ENCODE measurements at regions of chr18 and their contacts with region 1.

Region 1: DNA sequence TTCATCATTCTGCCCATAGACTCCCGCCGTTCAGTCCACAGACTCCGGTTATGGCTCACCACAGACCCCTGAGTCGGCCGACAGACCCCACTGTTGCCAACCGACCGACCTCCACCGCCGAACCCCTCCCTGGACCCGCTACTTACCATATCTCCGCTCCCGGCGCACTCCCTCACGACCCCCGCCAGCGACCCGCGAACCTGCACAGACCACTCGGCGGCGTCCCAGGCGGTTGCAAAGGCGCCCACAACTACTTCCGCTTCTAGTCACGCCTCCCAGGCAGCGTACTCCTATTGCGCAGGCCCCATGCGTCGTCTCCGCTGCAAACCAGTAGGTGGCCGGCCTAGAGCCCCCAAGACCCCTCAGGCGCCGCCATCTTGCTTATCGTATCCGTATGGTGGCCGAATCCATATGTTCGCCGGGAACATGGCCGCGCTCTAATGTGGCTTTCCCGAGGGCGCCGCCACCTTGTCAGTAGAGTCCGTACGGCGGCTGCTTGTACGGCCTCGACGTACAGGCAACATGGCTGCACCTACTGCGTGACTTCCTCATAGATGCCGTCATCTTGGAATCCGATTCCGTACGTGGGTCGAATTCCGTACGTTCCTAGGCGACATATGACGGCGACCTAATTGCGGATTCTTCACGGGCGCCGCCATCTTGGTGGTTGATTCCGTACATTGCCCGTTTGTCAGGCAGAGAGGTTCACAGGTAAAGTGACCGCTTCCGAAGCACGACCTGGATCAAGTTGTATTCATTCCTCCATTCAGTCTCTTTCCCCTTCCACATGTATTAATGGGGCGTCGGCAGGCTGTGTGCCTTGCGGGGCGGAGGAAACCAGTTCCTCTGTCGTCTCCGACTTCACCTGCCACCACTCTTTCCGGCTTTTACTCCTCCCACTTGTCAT is at the start of gene CXXC1:
- DNase-seq: peak; percentile 89 to 98 (median 97)
- ATAC-seq: peak; percentile 92
- H3K4me3 ChIP-seq: peak within 1 kb of the TSS; percentile 98
- H3K4me3 Mint-ChIP-seq: peak within 1 kb of the TSS; percentile 91 to 100 (median 98)
- H3K27ac ChIP-seq: peak within 1 kb of the TSS; percentile 97
- H3K27ac Mint-ChIP-seq: peak within 1 kb of the TSS; percentile 94 to 100 (median 99)
- H3K4me1 ChIP-seq: peaks cover 0 to 7% of the 10 kb centered on the region in 2 donors
- H3K4me1 Mint-ChIP-seq: peaks cover 6 to 39% (median 28%) of the 10 kb centered on the region in 7 donors
- H3K27me3 ChIP-seq: no peaks in the 10 kb centered on the region
- H3K27me3 Mint-ChIP-seq: peaks cover 0 to 2% (median 0%) of the 10 kb centered on the region in 5 donors
- total RNA-seq, gene CXXC1: 141 to 197 (median 155) TPM

Region 2: DNA sequence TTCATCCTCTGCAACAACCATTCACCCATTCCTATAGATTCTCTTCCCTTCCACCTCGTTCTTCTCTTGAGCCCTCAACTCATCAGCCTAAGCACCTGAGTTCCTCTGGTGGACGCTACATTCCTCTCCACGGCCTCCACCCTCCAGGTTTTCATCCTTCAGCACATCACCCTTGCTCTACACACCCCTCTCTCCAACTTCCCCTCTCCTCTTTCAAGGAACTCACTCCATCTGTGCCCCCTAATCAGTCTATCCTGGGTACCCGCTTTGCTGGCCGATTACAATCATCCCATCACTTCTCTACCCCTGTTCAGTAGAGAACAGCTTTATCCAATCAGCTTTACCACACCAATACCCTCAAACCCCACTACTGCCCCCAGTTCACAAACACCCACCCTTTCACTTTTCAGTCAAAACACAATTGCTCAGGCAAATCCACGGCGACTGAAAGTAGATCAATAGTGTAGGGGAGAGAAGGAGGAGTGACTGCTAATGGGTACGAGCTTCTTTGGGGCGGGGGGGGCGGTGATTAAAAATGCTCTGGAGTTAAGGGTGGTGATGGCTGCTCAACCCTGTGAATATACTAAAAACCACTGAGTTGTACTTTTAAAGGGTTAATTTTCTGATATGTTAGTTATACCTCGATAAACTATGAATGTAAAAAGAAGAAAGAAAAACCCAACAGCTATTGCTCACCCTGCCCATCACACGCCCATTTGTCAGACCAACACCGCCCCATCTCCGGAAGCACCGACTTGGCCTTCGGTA is 828.1 kb before region 1 on chr18:
- CTCF ChIA-PET with region 1: no interaction called
- POLR2A ChIA-PET with region 1: no interaction called
- intact Hi-C with region 1: loop called in 1 of 2 experiments (anchors 1 kb)
- DNase-seq: peak in 3 of 9 donors; percentile 4 to 17 (median 5)
- ATAC-seq: peak; percentile 19
- H3K4me3 ChIP-seq: peak overlapping the region; percentile 86
- H3K4me3 Mint-ChIP-seq: peak overlapping the region; percentile 88 to 95 (median 94)
- H3K27ac ChIP-seq: peak overlapping the region; percentile 80
- H3K27ac Mint-ChIP-seq: peak overlapping the region; percentile 67 to 89 (median 83)
- H3K4me1 ChIP-seq: peaks cover 14 to 26% of the 10 kb centered on the region in 2 donors
- H3K4me1 Mint-ChIP-seq: peaks cover 34 to 62% (median 47%) of the 10 kb centered on the region in 7 donors
- H3K27me3 ChIP-seq: no peaks in the 10 kb centered on the region
- H3K27me3 Mint-ChIP-seq: peaks cover 0 to 6% (median 0%) of the 10 kb centered on the region in 5 donors

Region 3: DNA sequence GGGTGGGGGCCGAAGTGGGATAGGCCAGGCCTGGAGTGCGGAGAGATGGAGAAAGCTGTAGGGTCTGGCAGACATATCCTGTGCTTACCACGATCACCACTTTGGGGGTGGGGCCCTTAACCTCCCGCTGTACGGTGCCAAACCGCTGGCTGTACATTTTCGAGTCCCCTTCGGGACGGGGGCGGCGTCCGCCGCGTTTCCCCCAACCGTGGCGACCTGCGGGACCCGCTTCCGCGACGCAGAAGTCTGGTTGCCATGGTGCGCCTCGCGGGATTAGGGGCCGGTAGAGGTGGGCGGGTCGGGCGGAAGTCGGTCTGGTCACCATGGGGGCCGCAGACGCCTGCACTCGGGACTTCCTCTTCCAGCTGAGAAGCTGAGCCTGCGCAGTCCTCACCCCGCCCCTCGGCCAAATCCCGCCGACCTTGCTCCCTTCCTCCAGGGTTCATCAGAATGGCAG is 21.4 kb before region 1 on chr18 and contains the start of gene CFAP53:
- CTCF ChIA-PET with region 1: no interaction called
- POLR2A ChIA-PET with region 1: interaction called, 3 read pairs
- intact Hi-C with region 1: loop called (anchors 1 kb)
- DNase-seq: peak; percentile 51 to 83 (median 69)
- ATAC-seq: peak; percentile 88
- H3K4me3 ChIP-seq: peak within 1 kb of the TSS; percentile 59
- H3K4me3 Mint-ChIP-seq: peak within 1 kb of the TSS; percentile 79 to 94 (median 90)
- H3K27ac ChIP-seq: peak within 1 kb of the TSS; percentile 50
- H3K27ac Mint-ChIP-seq: peak within 1 kb of the TSS; percentile 57 to 92 (median 81)
- H3K4me1 ChIP-seq: peaks cover 4 to 5% of the 10 kb centered on the region in 2 donors
- H3K4me1 Mint-ChIP-seq: peaks cover 9 to 29% (median 25%) of the 10 kb centered on the region in 7 donors
- H3K27me3 ChIP-seq: no peaks in the 10 kb centered on the region
- H3K27me3 Mint-ChIP-seq: peaks cover 0 to 17% (median 0%) of the 10 kb centered on the region in 5 donors
- total RNA-seq, gene CFAP53: 0.19 to 1.8 (median 0.64) TPM

Region 4: DNA sequence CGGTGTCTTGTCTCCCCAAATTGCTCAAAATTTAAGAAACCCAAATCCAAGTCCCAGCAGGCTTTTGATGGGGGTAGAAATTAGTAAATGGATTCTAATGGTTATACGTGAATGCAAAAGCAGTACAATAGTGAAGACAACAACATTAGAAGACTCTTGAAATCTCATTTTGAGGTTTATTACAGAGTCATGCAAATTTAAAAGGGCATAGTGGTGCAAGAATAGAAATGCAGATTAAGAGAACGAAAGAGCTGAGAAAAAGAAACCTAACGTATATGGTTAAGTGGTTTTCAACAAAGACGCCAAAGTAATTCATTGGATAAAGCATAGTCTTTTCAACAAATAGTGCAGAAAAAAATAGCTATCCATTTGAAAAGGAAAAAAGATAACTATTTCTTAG is 33.0 kb after region 1 on chr18:
- CTCF ChIA-PET with region 1: no interaction called
- POLR2A ChIA-PET with region 1: no interaction called
- intact Hi-C with region 1: loop called in 1 of 2 experiments (anchors 1 kb)
- DNase-seq: peak in 2 of 9 donors; percentile 6 to 16
- ATAC-seq: no peak
- H3K4me3 ChIP-seq: no peak overlapping the region
- H3K4me3 Mint-ChIP-seq: peak overlapping the region in 8 of 10 donors; percentile 23 to 65 (median 56)
- H3K27ac ChIP-seq: no peak overlapping the region
- H3K27ac Mint-ChIP-seq: peak overlapping the region in 4 of 9 donors; percentile 32 to 68 (median 64)
- H3K4me1 ChIP-seq: no peaks in the 10 kb centered on the region
- H3K4me1 Mint-ChIP-seq: peaks cover 2 to 27% (median 9%) of the 10 kb centered on the region in 7 donors
- H3K27me3 ChIP-seq: no peaks in the 10 kb centered on the region
- H3K27me3 Mint-ChIP-seq: peaks cover 0 to 27% (median 6%) of the 10 kb centered on the region in 5 donors

Region 5: GRCh38 chr18:50878345-50879301 is 590.9 kb after region 1 on chr18 and contains the start of gene ME2:
- CTCF ChIA-PET with region 1: no interaction called
- POLR2A ChIA-PET with region 1: no interaction called
- intact Hi-C with region 1: loop called in 1 of 2 experiments (anchors 2 kb)
- DNase-seq: peak; percentile 82 to 95 (median 89)
- ATAC-seq: peak; percentile 94
- H3K4me3 ChIP-seq: peak within 1 kb of the TSS; percentile 61
- H3K4me3 Mint-ChIP-seq: peak within 1 kb of the TSS; percentile 95 to 99 (median 97)
- H3K27ac ChIP-seq: peak within 1 kb of the TSS; percentile 98
- H3K27ac Mint-ChIP-seq: peak within 1 kb of the TSS; percentile 93 to 99 (median 98)
- H3K4me1 ChIP-seq: peaks cover 17% of the 10 kb centered on the region in 2 donors
- H3K4me1 Mint-ChIP-seq: peaks cover 18 to 37% (median 34%) of the 10 kb centered on the region in 7 donors
- H3K27me3 ChIP-seq: no peaks in the 10 kb centered on the region
- H3K27me3 Mint-ChIP-seq: peaks cover 0 to 11% (median 4%) of the 10 kb centered on the region in 5 donors
- total RNA-seq, gene ME2: 29.4 to 84.7 (median 43.2) TPM

Measured in naive thymus-derived CD4-positive, alpha-beta T cell (primary cell).